HepG2 (cell line): ENCODE measurements at regions of chr3 and their contacts with region 1.

Region 1: DNA sequence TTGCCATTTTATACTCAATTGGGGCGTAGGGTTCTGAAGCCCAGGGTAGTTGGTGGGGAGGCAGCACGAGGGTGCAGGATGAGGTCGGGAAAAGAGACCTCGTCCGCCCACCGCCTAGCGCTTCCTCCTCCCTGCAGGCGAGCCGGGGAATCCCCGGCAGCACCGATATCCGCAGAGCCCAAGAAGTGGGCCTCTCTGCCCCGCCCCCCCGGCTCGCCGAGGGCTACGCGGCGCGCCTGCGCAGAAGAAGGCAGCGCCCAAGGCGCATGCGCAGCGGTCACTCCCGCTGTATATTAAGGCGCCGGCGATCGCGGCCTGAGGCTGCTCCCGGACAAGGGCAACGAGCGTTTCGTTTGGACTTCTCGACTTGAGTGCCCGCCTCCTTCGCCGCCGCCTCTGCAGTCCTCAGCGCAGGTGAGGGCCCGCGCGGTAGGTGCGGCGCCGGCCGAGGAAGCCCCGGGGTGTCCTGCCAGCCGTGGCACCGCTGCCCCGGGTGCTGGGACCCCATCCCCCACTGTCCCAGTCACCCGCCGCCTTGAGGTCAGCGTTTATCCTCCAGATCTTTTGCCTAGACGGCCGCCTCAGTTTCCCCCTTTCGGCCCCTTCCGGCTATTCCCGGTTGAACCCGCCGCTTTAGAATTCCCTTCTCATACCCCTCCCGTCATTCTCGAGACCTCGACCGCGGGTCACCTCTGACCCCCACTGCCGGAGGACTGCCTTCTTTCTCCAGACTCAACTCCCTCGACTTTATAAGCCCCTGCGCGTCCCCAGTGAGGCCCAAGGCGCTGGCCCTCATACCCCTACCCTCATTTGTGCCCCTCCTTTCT is at the start of gene ALAS1:
- DNase-seq: peak; percentile 82
- ATAC-seq: peak; percentile 91
- H3K4me3 ChIP-seq: peak within 1 kb of the TSS; percentile 86 to 94 (median 90)
- H3K27ac ChIP-seq: peak within 1 kb of the TSS; percentile 57
- H3K4me1 ChIP-seq: peaks cover 67% of the 10 kb centered on the region
- H3K27me3 ChIP-seq: 0 out of 5 replicates have a peak, but pooled peaks cover 0 to 5% of the 10 kb centered on the region in 2 experiments
- CTCF ChIP-seq: no peak; the same call in 1 of the 2 replicates
- EP300 ChIP-seq: no peak
- POLR2A ChIP-seq: peak; percentile 87 to 98
- RAD21 ChIP-seq: peak; percentile 29; the same call in 1 of the 2 replicates
- total RNA-seq, gene ALAS1: 36.0 and 40.2 TPM in 2 replicates

Region 2: DNA sequence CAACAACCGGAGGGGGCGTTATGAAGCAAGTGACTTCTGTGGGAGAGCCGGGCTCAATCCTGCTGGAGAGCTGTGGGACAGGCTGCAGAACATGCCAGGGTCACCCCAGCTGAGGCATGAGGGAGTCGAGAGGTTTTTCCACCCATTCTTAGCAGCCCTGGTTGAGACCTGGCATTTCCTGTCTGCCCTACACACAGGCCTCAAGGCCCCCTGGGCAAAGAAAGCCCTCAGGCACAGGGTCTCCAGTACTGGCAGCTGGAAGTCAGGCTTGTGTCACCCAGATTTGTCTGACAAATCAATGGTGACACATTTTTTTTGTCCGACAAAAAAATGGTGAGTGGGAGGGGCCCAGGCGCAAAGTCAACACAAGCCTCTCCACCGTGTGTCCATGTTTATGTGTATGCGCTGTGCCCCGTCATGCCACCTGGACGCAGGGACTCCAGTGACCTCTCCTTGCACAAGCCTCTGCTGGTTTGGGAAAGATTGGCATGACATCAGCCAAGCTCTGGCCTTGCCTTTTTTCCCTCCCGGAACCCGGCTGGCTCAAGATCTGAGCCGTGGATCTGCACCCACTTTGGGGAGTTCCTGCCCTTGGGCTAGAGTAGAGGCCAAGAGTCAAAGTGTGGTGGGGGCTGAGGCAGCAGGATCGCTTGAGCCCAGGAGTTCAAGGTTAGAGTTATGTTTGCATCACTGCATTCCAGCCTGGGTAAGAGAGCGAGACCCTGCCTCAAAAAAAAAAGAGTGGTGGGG is 20.9 kb before region 1 on chr3:
- CTCF ChIA-PET with region 1: no interaction called
- POLR2A ChIA-PET with region 1: interaction called, 24 read pairs
- in situ Hi-C with region 1: no loop called
- intact Hi-C with region 1: loop called (anchors 1 kb)
- DNase-seq: peak; percentile 86
- ATAC-seq: peak; percentile 81
- H3K4me3 ChIP-seq: peak overlapping the region; percentile 43 to 60 (median 48); a peak in 5 of 6 replicates
- H3K27ac ChIP-seq: peak overlapping the region; percentile 85
- H3K4me1 ChIP-seq: peaks cover 64% of the 10 kb centered on the region
- H3K27me3 ChIP-seq: no peaks in the 10 kb centered on the region
- CTCF ChIP-seq: no peak; the same call in none of the 2 replicates
- EP300 ChIP-seq: peak; percentile 27 to 48; a peak in 2 of 4 replicates
- POLR2A ChIP-seq: peak; percentile 25 to 50; a peak in 2 of 4 replicates
- RAD21 ChIP-seq: no peak

Region 3: GRCh38 chr3:52210550-52211046 is 12.5 kb after region 1 on chr3:
- CTCF ChIA-PET with region 1: no interaction called
- POLR2A ChIA-PET with region 1: interaction called, 6 read pairs
- in situ Hi-C with region 1: no loop called
- intact Hi-C with region 1: loop called (anchors 1 kb)
- DNase-seq: peak; percentile 96
- ATAC-seq: peak; percentile 85
- H3K4me3 ChIP-seq: no peak overlapping the region
- H3K27ac ChIP-seq: peak overlapping the region; percentile 77
- H3K4me1 ChIP-seq: peaks cover 49% of the 10 kb centered on the region
- H3K27me3 ChIP-seq: no peaks in the 10 kb centered on the region
- CTCF ChIP-seq: no peak
- EP300 ChIP-seq: peak; percentile 91 to 98
- POLR2A ChIP-seq: 0 out of 4 replicates have a peak, but pooled peaks of 1 of the 2 experiments have one; percentile 9
- RAD21 ChIP-seq: no peak